Common myeloid progenitor, CD34-positive (primary cell): ENCODE measurements at regions of chr1 and their contacts with region 1.

Region 1: DNA sequence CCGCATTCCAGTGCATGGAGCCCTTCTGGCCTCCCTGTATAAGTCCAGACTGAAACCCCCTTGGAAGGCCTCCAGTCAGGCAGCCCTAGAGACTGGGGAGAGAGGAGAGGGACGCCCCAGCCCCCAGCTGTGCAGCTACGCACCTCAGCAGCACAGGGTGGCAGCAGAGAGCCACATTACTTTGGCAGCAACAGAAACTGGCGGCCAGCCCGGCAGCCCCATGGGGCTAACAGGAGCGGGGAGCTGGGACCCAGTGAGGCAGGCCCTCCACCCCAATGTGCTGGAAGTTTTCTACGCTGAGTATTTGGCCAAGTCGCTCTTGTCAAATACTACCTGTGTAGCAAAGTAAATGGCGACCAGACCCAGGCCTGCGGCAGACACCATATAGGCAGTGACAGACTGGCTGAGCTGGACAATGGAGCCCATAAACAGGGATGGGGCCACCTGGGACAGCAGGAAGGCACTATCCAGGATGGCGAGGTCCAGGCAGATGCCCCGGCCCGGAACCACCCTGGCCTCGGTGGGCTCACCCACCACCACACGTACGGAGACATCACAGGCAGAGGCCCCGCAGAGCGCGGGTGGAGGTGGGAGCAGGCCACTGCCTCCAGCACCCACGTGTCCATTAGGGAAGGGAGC is 21.2 kb downstream of the SLC45A3 start:
- DNase-seq: peak; percentile 69 to 81 (median 75)
- H3K4me3 ChIP-seq: no peak overlapping the region
- H3K27ac ChIP-seq: no peak overlapping the region
- H3K4me1 ChIP-seq: peaks cover 0 to 27% (median 23%) of the 10 kb centered on the region in 4 experiments
- H3K27me3 ChIP-seq: no peaks in the 10 kb centered on the region

Region 2: DNA sequence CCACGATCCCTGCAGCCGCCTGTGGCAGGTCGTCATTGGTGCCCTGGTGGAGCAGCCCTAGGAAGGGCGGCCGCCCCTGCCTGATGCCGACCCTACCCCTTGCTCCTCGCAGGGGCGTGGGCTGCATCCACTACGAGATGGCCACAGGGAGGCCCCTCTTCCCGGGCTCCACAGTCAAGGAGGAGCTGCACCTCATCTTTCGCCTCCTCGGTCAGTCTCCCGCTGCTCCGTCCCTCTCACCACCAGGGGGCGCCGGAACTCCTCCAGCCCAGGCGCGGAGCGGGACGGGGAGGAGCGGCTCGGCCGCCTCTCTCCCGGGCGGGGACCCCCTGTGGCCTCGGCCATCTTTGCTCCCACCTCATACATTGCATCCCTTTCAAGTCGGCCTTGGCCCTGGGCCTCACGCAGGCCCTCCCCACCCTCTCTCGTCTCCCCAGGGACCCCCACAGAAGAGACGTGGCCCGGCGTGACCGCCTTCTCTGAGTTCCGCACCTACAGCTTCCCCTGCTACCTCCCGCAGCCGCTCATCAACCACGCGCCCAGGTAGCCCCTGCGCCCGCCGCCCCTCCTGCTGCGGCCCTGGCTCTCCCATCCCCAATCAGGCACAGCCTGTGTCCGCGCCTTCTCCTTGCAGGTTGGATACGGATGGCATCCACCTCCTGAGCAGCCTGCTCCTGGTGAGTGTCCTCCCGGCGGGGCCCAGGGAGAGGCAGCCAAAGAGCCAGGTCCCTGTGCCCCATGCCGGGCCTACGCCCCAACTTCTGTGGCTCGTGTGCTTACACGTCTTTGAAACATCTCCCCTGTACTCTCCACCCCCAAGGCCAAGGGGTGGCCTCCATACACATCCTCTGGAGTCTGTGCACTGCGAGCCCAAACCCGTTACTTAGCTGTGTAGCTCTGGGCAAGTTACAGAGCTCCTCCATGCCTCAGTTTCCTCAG is 129.9 kb before region 1 on chr1:
- CTCF ChIA-PET with region 1: interaction called, 68 read pairs
- POLR2A ChIA-PET with region 1: no interaction called
- DNase-seq: peak; percentile 71 to 76 (median 74)
- H3K4me3 ChIP-seq: peak overlapping the region in 4 of 7 experiments; percentile 32 to 70 (median 44)
- H3K27ac ChIP-seq: no peak overlapping the region
- H3K4me1 ChIP-seq: peaks cover 0 to 5% (median 1%) of the 10 kb centered on the region in 4 experiments
- H3K27me3 ChIP-seq: no peaks in the 10 kb centered on the region

Region 3: GRCh38 chr1:205610036-205610435 is 49.0 kb before region 1 on chr1:
- CTCF ChIA-PET with region 1: no interaction called
- POLR2A ChIA-PET with region 1: no interaction called
- DNase-seq: no peak
- H3K4me3 ChIP-seq: no peak overlapping the region
- H3K27ac ChIP-seq: no peak overlapping the region
- H3K4me1 ChIP-seq: peaks cover 4 to 16% (median 8%) of the 10 kb centered on the region in 4 experiments
- H3K27me3 ChIP-seq: no peaks in the 10 kb centered on the region

Region 4: DNA sequence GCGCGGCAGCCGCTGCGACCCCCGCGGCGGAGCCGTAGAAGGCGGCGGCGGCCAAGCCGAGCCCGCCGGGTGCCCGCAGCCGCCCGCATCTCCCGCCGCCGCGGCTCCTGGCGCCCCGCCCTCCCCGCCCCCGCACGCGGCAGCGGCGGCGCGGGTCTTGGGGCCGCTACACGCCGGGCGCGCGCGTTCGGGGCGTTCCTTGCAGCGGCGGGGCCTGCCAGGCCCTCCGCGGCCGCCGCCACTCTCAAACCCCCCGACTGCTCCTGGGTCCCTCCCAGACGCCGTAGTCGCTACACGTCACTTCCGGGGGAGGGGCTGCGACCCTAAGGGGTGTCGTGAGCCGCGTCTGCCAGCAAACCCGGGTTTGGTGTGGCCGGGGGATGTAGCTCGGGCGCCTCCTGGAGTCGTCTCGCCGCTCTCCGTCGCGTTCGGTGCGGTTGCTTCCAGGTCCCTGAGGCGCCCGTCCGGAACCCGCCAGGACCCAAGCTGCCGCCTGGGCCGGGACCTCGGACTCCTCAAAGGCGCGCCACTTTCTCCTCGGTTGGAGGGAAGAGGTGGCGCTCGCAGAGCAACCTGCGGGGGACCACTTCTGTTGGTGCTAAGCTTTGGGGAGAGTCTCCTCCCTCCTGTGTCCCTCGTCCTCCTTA is 27.2 kb before region 1 on chr1 and contains the start of gene ELK4:
- CTCF ChIA-PET with region 1: interaction called, 48 read pairs
- POLR2A ChIA-PET with region 1: no interaction called
- DNase-seq: peak; percentile 99 to 100 (median 99)
- H3K4me3 ChIP-seq: peak within 1 kb of the TSS; percentile 67 to 95 (median 90)
- H3K27ac ChIP-seq: peak within 1 kb of the TSS; percentile 80 to 92
- H3K4me1 ChIP-seq: peaks cover 8 to 26% (median 21%) of the 10 kb centered on the region in 4 experiments
- H3K27me3 ChIP-seq: no peaks in the 10 kb centered on the region

Region 5: GRCh38 chr1:205693421-205693991 is 34.4 kb after region 1 on chr1:
- CTCF ChIA-PET with region 1: interaction called, 1,013 read pairs
- POLR2A ChIA-PET with region 1: no interaction called
- DNase-seq: peak in 1 of 3 donors; percentile 58
- H3K4me3 ChIP-seq: peak overlapping the region in 2 of 7 experiments; percentile 11 to 38
- H3K27ac ChIP-seq: peak overlapping the region in 1 of 2 experiments; percentile 21
- H3K4me1 ChIP-seq: peaks cover 3 to 64% (median 54%) of the 10 kb centered on the region in 4 experiments
- H3K27me3 ChIP-seq: no peaks in the 10 kb centered on the region

Region 6: DNA sequence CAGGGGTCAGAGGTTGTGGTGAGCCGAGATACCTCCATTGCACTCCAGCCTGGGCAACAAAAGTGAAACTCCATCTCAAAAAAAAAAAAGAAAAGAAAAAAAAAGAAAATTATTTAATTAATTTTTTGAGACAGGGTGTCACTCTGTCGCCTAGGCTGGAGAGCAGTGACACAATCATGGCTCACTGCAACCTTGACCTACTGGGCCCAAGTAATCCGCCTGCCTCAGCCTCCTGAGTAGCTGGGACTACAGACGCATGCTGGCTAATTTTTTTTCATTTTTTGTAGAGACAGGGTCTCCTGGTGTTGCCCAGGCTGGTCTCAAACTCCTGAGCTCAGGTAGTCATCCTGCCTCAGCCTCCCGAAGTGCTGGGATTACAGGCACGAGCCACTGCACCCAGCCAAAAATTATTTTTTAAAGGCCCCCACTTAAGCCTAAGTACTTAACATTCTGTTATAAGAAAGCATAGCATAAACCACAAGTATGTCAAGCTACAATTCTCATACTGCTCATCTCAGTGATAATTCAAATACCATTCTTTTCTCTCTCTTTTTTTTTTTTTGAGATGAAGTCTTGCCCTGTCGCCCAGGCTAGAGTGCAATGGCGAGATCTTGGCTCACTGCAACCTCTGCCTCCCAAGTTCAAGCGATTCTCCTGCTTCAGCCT is 71.0 kb after region 1 on chr1:
- CTCF ChIA-PET with region 1: interaction called, 59 read pairs
- POLR2A ChIA-PET with region 1: no interaction called
- DNase-seq: no peak
- H3K4me3 ChIP-seq: no peak overlapping the region
- H3K27ac ChIP-seq: no peak overlapping the region
- H3K4me1 ChIP-seq: no peaks in the 10 kb centered on the region
- H3K27me3 ChIP-seq: no peaks in the 10 kb centered on the region

Region 7: DNA sequence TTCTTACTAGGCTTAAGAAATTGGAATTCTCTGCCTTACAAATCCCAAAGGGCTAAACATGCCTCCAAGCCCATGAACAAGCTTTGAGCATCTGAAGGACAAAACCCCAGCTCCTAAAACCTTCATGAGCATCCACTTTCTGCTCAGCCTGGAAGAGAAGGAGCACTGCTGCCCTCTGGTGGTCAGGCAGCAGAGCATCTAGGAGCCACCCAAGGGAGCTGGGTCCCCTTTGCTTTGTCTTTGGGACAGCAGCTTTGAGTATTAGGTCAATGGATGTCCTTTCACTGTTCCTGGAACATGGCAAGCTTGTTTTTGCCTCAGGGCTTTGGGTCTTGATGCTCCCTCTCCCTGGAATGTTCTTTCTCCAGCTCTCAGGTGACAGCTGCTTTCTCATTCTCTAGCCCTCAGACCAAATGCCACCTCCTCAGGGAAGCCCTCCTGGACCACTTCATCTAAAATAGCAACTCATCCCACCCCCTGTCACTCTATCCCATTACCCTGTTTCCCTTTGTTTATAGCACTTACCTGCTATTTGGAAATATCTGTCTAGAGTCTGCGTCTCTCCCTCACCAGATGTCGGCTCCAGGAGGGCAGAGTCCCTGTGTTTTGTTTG is 318.4 kb after region 1 on chr1:
- CTCF ChIA-PET with region 1: interaction called, 13 read pairs
- POLR2A ChIA-PET with region 1: no interaction called
- DNase-seq: peak; percentile 82 to 91 (median 86)
- H3K4me3 ChIP-seq: no peak overlapping the region
- H3K27ac ChIP-seq: no peak overlapping the region
- H3K4me1 ChIP-seq: peaks cover 0 to 6% (median 4%) of the 10 kb centered on the region in 4 experiments
- H3K27me3 ChIP-seq: no peaks in the 10 kb centered on the region